OCI-LY7 (cell line): ENCODE measurements at regions of chr7 and their contacts with region 1.

Region 1: DNA sequence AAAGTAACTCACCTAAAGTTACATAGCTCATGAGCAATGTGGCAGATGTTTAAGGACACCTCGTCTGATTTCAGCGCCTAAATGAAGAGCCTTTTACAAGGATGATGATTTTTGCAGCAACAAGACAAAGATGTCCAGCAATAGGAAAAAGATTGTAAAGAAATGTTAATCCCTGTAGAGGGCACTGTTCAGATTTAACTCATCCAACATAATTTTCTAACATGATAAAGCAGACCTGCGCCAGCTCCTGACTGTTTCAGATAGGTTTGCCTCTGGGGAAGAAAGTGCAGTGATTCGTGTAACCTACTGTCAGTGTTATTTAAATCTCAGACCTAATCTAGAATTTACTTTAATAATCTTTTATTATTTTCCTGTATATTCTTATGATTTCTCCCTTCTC is 595.2 kb downstream of the AUTS2 start:
- DNase-seq: peak; percentile 70
- H3K4me3 ChIP-seq: no peak overlapping the region
- H3K27ac ChIP-seq: no peak overlapping the region
- H3K4me1 ChIP-seq: peaks cover 4% of the 10 kb centered on the region
- CTCF ChIP-seq: peak; percentile 80

Region 2: GRCh38 chr7:70426249-70426880 is 232.9 kb after region 1 on chr7:
- CTCF ChIA-PET with region 1: no interaction called
- POLR2A ChIA-PET with region 1: no interaction called
- intact Hi-C with region 1: loop called (anchors 10 kb)
- DNase-seq: peak; percentile 90
- H3K4me3 ChIP-seq: peak overlapping the region; percentile 46
- H3K27ac ChIP-seq: peak overlapping the region; percentile 91
- H3K4me1 ChIP-seq: peaks cover 57% of the 10 kb centered on the region
- CTCF ChIP-seq: no peak

Region 3: DNA sequence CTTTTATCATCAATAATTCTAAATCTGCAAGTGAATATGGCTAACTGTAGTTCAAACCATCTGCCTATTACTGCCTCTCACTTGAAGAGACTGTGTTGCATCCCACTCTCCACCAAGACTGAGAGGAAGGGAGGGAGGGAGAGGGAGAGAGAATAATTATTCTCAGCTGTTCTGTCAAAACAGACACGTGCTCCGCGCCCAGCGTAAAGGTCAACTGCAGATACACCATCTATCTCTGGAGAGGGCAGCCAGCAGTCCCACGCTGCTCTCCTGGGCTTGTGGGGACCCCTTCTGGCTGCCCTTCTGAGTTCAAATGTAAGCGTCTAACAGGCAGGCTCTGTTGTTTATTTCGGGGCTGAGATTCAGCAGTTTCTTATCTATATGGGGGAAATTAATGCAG is 312.9 kb after region 1 on chr7:
- CTCF ChIA-PET with region 1: no interaction called
- POLR2A ChIA-PET with region 1: no interaction called
- intact Hi-C with region 1: loop called (anchors 5 kb)
- DNase-seq: peak; percentile 52
- H3K4me3 ChIP-seq: no peak overlapping the region
- H3K27ac ChIP-seq: no peak overlapping the region
- H3K4me1 ChIP-seq: peaks cover 7% of the 10 kb centered on the region
- CTCF ChIP-seq: peak; percentile 74